ENCODE measurements at regions of chr15 and their contacts with region 1.

Region 1: DNA sequence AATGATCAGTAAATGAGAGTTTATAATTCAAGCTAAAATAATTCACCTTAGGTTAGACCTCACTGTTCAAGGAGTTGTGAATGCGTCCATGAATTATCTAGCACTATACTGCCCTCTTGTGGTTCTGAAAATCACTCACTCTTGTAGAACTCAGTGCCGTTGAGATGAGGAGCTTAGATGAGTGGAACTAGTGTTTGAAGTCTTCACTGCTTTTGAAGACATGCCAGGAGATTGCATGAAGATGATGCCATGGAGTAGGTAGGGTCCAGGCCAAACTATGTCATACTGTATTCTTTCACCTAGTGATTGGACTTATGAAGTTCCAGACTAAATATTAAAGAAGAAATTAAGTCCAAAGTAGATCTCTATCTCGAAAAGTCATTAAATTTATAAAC is 28.8 kb downstream of the LYSMD4 start:
- DNase-seq: peak; percentile 57
- H3K4me3 ChIP-seq: no peak overlapping the region
- H3K27me3 ChIP-seq: no peaks in the 10 kb centered on the region
- CTCF ChIP-seq: peak; percentile 64

Region 2: DNA sequence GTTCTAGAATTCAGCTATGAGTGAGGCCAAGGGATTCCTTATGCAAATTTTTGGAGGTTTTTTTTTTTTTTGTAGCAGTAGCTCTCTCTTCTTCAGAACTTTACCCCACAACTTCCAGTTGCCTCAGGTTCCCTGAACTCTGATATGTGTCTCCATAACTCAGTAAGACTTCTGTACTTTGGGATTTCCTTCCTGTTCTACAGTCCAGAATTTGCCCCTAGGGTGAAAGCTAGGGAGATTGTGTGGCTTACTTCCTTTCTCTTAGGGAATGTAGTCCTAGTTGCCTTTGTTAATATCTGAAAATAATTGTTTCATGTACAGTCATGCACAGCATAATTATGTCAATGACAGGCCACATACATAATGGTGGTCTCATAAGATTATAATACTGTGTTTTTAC is 422.3 kb before region 1 on chr15:
- CTCF ChIA-PET with region 1: interaction called, 71 read pairs
- POLR2A ChIA-PET with region 1: no interaction called
- DNase-seq: no peak
- H3K4me3 ChIP-seq: no peak overlapping the region
- H3K27me3 ChIP-seq: no peaks in the 10 kb centered on the region
- CTCF ChIP-seq: no peak

Region 3: GRCh38 chr15:99371180-99372103 is 333.0 kb before region 1 on chr15:
- CTCF ChIA-PET with region 1: no interaction called
- POLR2A ChIA-PET with region 1: no interaction called
- DNase-seq: no peak
- H3K4me3 ChIP-seq: no peak overlapping the region
- H3K27me3 ChIP-seq: no peaks in the 10 kb centered on the region
- CTCF ChIP-seq: no peak

Region 4: DNA sequence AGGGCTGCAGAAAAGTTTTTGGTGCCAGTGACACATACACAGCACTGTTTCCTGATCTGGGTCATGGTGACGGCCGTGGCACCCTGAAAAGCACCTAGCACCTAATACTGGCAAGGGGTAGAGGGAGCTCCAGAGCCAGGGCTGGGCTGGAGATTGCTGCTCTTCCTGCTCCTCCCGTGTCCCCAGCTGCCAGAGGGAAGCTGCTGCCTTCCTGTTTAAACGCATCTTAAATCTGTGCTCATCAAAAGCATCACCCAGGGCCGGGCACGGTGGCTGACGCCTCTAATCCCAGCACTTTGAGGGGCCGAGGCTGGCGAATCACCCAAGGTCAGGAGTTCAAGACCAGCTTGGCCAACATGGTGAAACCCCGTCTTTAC is 295.4 kb before region 1 on chr15:
- CTCF ChIA-PET with region 1: interaction called, 31 read pairs
- POLR2A ChIA-PET with region 1: no interaction called
- DNase-seq: no peak
- H3K4me3 ChIP-seq: no peak overlapping the region
- H3K27me3 ChIP-seq: no peaks in the 10 kb centered on the region
- CTCF ChIP-seq: peak; percentile 66

Region 5: DNA sequence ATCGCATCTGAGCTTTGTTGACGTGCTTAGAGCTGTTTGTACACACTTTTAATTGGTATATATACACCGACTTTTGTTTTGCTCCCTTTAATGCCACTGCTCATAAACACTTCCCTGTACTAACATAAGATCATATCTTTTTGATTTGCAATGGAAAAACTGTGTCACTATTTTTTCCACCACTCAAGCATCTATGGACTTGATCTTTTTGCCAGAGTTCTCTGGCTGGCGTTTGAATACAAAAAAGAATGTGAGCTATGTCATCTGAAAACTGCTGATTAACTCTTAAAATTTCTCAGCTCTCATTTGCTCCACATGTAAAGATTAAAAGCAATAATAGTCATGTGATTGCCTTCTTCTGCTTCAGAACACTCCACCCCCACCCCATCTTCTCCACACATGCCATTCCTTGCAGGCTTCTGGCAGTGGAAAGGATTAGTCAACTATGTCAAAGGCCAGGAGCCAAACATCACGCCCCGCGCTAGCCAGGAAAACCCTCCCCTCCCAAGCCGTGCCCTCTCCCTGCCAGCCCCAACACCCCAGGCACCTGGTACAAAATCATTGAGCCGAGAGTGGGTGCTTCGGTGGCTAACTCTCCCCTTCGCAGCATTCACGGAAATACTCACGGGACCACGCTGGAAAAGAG is 262.1 kb before region 1 on chr15:
- CTCF ChIA-PET with region 1: interaction called, 13 read pairs
- POLR2A ChIA-PET with region 1: no interaction called
- DNase-seq: peak; percentile 82
- H3K4me3 ChIP-seq: no peak overlapping the region
- H3K27me3 ChIP-seq: no peaks in the 10 kb centered on the region
- CTCF ChIP-seq: no peak

Region 6: DNA sequence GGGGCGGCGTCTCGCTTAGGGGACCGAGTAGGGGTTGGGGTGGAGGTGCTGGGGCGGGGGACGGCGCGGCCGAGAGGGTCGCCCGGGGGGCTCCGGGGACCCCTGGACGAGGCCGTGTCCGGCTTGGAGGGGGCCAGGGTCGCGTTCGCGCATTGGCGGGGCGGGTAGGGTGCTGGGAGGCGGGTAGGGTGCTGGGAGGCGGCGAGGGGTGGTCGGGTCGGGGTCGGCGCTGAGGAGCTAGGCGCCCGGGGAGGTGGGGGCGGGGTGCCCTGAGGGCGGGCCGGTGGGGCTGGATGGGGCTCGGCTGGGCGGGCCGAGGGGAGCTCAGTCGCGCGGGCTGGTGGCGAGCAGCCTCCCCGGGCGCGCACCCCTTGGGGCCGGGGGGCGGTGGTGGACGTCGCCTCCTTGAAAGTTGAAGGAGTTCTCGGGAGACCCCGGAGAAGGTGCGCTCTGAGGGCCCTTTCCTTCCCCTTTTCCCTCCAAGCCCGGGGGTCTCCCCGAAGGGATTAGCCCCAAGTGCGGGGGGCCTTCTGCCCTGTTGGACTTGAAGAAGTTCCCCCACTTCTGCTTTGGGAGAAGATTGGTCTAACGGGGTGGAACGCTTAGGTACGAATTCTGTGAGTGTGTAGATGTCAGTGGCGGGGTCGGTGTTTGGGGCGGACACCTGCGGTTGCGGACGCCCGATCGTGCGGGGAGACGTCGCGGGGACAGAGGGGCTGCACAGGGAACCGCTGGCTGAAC is 138.1 kb before region 1 on chr15:
- CTCF ChIA-PET with region 1: interaction called, 17 read pairs
- POLR2A ChIA-PET with region 1: interaction called, 3 read pairs
- DNase-seq: no peak
- H3K4me3 ChIP-seq: peak overlapping the region; percentile 49
- H3K27me3 ChIP-seq: peaks cover 2% of the 10 kb centered on the region; the same call in 1 of the 2 replicates
- CTCF ChIP-seq: no peak

Region 7: GRCh38 chr15:99692825-99693224 is 11.6 kb before region 1 on chr15:
- CTCF ChIA-PET with region 1: interaction called, 20 read pairs
- POLR2A ChIA-PET with region 1: interaction called, 3 read pairs
- DNase-seq: no peak
- H3K4me3 ChIP-seq: no peak overlapping the region
- H3K27me3 ChIP-seq: no peaks in the 10 kb centered on the region
- CTCF ChIP-seq: no peak

Region 8: DNA sequence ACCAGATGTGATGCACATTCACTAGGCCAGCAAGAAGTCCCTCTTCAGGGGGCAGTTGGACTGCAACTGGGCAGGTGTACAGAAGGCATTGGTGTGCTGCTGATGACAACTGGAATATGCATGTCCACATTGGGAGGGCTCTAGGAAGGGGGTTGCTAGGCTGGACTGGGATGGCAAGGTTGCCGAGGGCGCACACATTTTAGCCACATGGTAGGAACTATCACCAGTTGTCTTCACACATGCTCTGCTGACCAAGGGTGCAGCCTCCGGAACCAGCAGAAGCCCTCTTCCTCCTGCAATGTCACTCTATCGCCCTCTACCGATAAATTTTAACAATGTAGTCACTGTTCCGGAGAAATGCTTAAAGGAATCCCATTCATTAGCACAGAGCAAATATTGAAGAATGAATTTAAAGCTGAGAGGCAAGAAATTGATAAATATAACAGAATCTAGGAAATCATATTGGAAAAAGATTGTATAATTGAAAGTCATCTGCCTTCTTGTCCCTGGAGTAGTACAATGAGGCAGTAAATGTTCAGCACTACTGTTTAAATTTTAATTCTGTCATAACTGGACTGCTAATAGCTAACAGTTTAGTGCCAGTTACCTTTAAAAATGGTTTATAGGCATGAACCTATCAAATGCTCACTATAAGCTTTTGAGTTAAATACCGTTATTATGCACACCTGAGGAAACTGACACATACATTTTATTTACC is 51.4 kb after region 1 on chr15:
- CTCF ChIA-PET with region 1: interaction called, 12 read pairs
- POLR2A ChIA-PET with region 1: no interaction called
- DNase-seq: no peak
- H3K4me3 ChIP-seq: no peak overlapping the region
- H3K27me3 ChIP-seq: no peaks in the 10 kb centered on the region
- CTCF ChIP-seq: peak; percentile 84

Measured in BJ (cell line).